ENCODE measurements at regions of chr3 and their contacts with region 1.

Region 1: DNA sequence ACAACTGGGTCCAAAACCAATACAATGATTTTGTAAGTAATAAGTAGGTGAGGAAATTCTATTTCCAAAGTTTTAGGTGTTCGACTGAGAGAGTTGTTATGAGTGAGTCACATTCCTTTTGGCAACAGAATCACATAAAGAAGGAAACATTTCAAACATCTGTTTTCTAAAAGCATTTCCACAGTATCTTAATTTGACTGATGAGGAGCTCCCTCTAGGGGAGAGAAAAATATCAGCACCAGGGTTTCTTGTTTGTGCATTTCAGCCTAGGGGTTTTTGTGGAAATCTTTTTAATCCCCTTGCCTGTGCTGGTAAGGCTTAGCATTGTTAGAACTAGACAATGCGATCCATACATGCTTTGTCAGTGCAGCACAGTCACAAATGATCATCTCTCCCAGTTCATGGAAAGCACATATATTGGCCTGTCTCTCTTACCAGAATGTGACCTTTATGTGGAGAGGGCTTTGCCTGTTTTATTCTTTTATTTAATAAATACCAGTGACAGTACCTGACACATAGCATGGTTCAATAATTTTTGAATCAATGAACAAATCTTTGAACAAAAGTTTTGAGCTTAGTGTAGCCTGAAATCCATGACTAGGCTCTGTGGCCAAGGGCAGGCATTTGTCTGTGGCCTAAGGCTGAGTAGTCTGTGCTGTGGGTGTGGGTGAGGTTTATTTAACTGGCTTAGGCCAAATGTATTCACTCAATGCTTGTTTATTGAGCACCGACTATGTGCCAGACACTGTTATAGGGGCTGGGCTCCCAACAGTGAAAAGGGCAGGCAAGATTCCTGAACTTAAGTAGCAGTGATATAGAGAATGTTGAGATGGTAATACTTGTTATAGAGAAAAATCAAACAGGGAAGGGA is 21.1 kb upstream of the IQCF6 start:
- DNase-seq: peak in 4 of 9 experiments; percentile 18 to 70 (median 52)
- ATAC-seq: peak; percentile 29
- H3K4me3 ChIP-seq: no peak overlapping the region
- H3K4me3 Mint-ChIP-seq: no peak overlapping the region
- H3K27ac ChIP-seq: no peak overlapping the region
- H3K27ac Mint-ChIP-seq: no peak overlapping the region
- H3K4me1 ChIP-seq: no peaks in the 10 kb centered on the region
- H3K4me1 Mint-ChIP-seq: peaks cover 17% of the 10 kb centered on the region
- H3K27me3 ChIP-seq: no peaks in the 10 kb centered on the region
- H3K27me3 Mint-ChIP-seq: peaks cover 12% of the 10 kb centered on the region
- CTCF ChIP-seq: peak; percentile 95

Region 2: DNA sequence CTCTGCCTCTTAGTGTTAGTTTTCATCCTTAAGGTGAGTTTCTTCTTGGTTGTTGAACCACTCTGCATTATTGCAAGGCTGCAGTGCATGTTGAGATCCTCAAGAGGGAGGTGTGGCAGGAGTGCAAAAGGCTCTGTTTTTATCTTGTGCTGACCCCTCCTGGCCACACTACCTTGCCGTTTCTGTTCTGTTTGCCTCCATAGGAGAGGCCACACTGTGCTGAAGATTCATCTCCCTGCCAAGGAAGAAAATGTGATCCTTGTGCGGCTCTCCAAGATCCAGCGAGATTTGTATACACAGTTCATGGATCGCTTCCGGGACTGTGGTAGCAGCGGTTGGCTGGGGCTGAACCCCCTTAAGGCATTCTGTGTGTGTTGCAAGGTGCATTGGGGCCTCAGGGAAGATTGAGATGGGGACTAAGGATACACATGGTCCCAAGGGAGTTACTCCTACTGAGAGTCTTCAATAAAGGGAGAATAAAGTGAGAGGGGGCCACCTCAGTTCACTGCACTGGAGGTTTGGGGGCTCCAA is 162.1 kb before region 1 on chr3:
- CTCF ChIA-PET with region 1: interaction called, 6 read pairs
- POLR2A ChIA-PET with region 1: no interaction called
- intact Hi-C with region 1: loop called (anchors 5 to 10 kb)
- DNase-seq: peak in 3 of 9 experiments; percentile 27 to 50 (median 35)
- ATAC-seq: peak; percentile 73
- H3K4me3 ChIP-seq: no peak overlapping the region
- H3K4me3 Mint-ChIP-seq: no peak overlapping the region
- H3K27ac ChIP-seq: no peak overlapping the region
- H3K27ac Mint-ChIP-seq: no peak overlapping the region
- H3K4me1 ChIP-seq: no peaks in the 10 kb centered on the region
- H3K4me1 Mint-ChIP-seq: no peaks in the 10 kb centered on the region
- H3K27me3 ChIP-seq: no peaks in the 10 kb centered on the region
- H3K27me3 Mint-ChIP-seq: no peaks in the 10 kb centered on the region
- CTCF ChIP-seq: peak; percentile 25

Region 3: GRCh38 chr3:51718547-51719409 is 81.3 kb before region 1 on chr3:
- CTCF ChIA-PET with region 1: interaction called, 6 read pairs
- POLR2A ChIA-PET with region 1: no interaction called
- intact Hi-C with region 1: loop called in 1 of 2 experiments (anchors 5 kb)
- DNase-seq: peak in 4 of 9 experiments; percentile 22 to 66 (median 47)
- ATAC-seq: peak; percentile 14
- H3K4me3 ChIP-seq: no peak overlapping the region
- H3K4me3 Mint-ChIP-seq: no peak overlapping the region
- H3K27ac ChIP-seq: no peak overlapping the region
- H3K27ac Mint-ChIP-seq: no peak overlapping the region
- H3K4me1 ChIP-seq: peaks cover 20% of the 10 kb centered on the region
- H3K4me1 Mint-ChIP-seq: peaks cover 36% of the 10 kb centered on the region
- H3K27me3 ChIP-seq: no peaks in the 10 kb centered on the region
- H3K27me3 Mint-ChIP-seq: no peaks in the 10 kb centered on the region
- CTCF ChIP-seq: no peak

Measured in CD8-positive, alpha-beta T cell (primary cell).